Heart left ventricle (tissue), 16 donors: ENCODE measurements at regions of chr4 and their contacts with region 1.

Region 1: GRCh38 chr4:112604589-112604988 is 32.1 kb downstream of the ZGRF1 start:
- DNase-seq: peak in 3 of 5 donors; percentile 18 to 35 (median 19)
- ATAC-seq: peak; percentile 42 to 84 (median 64)
- H3K4me3 ChIP-seq: no peak overlapping the region
- H3K27ac ChIP-seq: no peak overlapping the region
- H3K4me1 ChIP-seq: no peaks in the 10 kb centered on the region
- H3K27me3 ChIP-seq: no peaks in the 10 kb centered on the region
- CTCF ChIP-seq: peak; percentile 22 to 72 (median 64)
- POLR2A ChIP-seq: no peak

Region 2: DNA sequence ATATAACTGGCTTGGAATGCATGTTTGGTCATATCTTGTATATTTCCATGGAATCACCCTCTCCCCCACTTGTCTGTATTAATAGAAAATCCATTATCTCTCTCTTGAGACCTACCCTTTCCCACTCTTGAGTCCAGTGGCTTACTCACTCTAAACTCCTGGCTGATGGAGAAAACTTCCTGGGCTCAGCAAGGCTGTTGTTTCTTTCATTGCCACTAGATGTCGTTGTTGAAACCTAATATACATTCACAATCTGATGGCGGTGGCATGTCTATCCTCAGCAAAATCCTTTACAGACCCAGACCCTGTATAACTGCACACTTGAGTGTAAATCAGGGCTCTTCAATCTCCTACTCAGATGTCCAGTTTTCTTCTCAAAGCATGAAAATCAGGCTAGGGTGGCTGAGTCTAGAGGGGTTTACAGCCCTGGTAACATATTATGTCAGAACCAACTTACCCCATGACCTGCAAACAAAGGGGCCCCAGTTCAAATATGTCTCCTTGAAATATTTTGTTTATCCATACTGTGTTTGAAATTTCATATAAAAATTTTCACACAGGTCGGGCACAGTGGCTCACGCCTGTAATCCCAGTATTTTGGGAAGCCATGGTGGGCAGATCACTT is 529.3 kb before region 1 on chr4:
- intact Hi-C with region 1: loop called in 1 of 10 experiments (anchors 10 kb)
- DNase-seq: no peak
- ATAC-seq: peak in 3 of 4 donors; percentile 62 to 76 (median 66)
- H3K4me3 ChIP-seq: no peak overlapping the region
- H3K27ac ChIP-seq: no peak overlapping the region
- H3K4me1 ChIP-seq: peaks cover 0 to 3% (median 0%) of the 10 kb centered on the region in 12 donors
- H3K27me3 ChIP-seq: no peaks in the 10 kb centered on the region
- CTCF ChIP-seq: peak; percentile 52 to 81 (median 72)
- POLR2A ChIP-seq: no peak

Region 3: GRCh38 chr4:112321776-112322684 is 282.6 kb before region 1 on chr4:
- intact Hi-C with region 1: loop called in 6 of 10 experiments (anchors 2 to 5 kb)
- DNase-seq: peak in 4 of 5 donors; percentile 34 to 56 (median 50)
- ATAC-seq: no peak
- H3K4me3 ChIP-seq: no peak overlapping the region
- H3K27ac ChIP-seq: no peak overlapping the region
- H3K4me1 ChIP-seq: peaks cover 0 to 17% (median 0%) of the 10 kb centered on the region in 12 donors
- H3K27me3 ChIP-seq: no peaks in the 10 kb centered on the region
- CTCF ChIP-seq: peak; percentile 75 to 98 (median 88)
- POLR2A ChIP-seq: no peak

Region 4: DNA sequence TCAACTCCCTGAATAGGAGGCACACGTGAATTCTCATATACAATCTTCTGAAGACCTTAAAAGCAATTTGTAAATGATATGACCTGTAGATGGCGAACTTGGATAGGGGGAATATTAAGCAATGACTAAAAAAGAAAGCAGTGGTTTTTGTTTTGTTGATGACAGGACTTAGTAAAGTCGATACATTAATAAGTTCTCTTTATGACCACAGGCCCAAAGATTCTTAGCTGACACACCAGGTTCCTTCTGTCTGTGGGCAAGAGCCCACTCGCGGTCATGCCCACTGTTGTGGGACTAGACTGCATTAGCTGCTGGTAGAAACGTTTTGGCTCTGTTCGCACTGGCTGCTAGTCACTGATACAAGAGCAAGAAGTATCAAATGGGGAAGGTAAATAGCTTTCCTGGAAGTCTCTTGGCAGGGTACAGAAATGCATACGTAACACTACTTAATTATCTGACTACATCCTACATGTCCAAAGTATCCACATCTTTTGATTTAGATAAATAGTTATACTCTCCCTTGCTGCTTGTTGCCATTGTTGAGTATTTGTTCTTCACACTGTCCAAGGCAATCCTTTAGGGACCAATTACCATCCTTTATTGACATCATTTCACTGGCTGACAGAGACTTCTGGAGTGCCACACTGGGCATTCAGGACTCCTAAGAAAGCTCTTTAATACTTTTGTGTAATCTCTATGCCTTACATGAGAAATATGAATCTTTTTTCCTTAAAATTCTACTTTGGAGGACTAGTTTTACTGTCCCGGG is 276.4 kb before region 1 on chr4:
- intact Hi-C with region 1: loop called in 9 of 10 experiments (anchors 1 to 5 kb)
- DNase-seq: no peak
- ATAC-seq: peak in 2 of 4 donors; percentile 37 to 43
- H3K4me3 ChIP-seq: no peak overlapping the region
- H3K27ac ChIP-seq: no peak overlapping the region
- H3K4me1 ChIP-seq: peaks cover 0 to 19% (median 0%) of the 10 kb centered on the region in 12 donors
- H3K27me3 ChIP-seq: no peaks in the 10 kb centered on the region
- CTCF ChIP-seq: peak; percentile 37 to 63 (median 50)
- POLR2A ChIP-seq: no peak